ENCODE measurements at regions of chr1 and their contacts with region 1.

Region 1: GRCh38 chr1:9249534-9250410 is 15.2 kb downstream of the H6PD start:
- DNase-seq: peak; percentile 79
- ATAC-seq: peak; percentile 78
- H3K4me3 ChIP-seq: peak overlapping the region; percentile 46 to 74 (median 52); a peak in 5 of 6 replicates
- H3K27ac ChIP-seq: peak overlapping the region; percentile 86
- H3K4me1 ChIP-seq: peaks cover 62% of the 10 kb centered on the region
- H3K27me3 ChIP-seq: no peaks in the 10 kb centered on the region
- CTCF ChIP-seq: peak; percentile 98
- EP300 ChIP-seq: peak in 1 of 2 experiments; percentile 57; a peak in 2 of 4 replicates
- POLR2A ChIP-seq: peak; percentile 40 to 65; a peak in 3 of 4 replicates
- RAD21 ChIP-seq: peak; percentile 90

Region 2: GRCh38 chr1:9110669-9111356 is 139.0 kb before region 1 on chr1:
- CTCF ChIA-PET with region 1: interaction called, 3 read pairs
- POLR2A ChIA-PET with region 1: interaction called, 9 read pairs
- in situ Hi-C with region 1: loop called (anchors 5 kb)
- intact Hi-C with region 1: no loop called
- DNase-seq: peak; percentile 85
- ATAC-seq: peak; percentile 53
- H3K4me3 ChIP-seq: no peak overlapping the region; a peak in 1 of 6 replicates
- H3K27ac ChIP-seq: no peak overlapping the region
- H3K4me1 ChIP-seq: peaks cover 55% of the 10 kb centered on the region
- H3K27me3 ChIP-seq: no peaks in the 10 kb centered on the region
- CTCF ChIP-seq: peak; percentile 97
- EP300 ChIP-seq: no peak
- POLR2A ChIP-seq: no peak
- RAD21 ChIP-seq: peak; percentile 93

Region 3: GRCh38 chr1:9166289-9167235 is 83.2 kb before region 1 on chr1:
- CTCF ChIA-PET with region 1: interaction called, 3 read pairs
- POLR2A ChIA-PET with region 1: interaction called, 12 read pairs
- in situ Hi-C with region 1: no loop called
- intact Hi-C with region 1: no loop called
- DNase-seq: no peak
- ATAC-seq: no peak
- H3K4me3 ChIP-seq: no peak overlapping the region
- H3K27ac ChIP-seq: no peak overlapping the region
- H3K4me1 ChIP-seq: peaks cover 81% of the 10 kb centered on the region
- H3K27me3 ChIP-seq: no peaks in the 10 kb centered on the region
- CTCF ChIP-seq: no peak
- EP300 ChIP-seq: no peak
- POLR2A ChIP-seq: no peak
- RAD21 ChIP-seq: no peak

Region 4: DNA sequence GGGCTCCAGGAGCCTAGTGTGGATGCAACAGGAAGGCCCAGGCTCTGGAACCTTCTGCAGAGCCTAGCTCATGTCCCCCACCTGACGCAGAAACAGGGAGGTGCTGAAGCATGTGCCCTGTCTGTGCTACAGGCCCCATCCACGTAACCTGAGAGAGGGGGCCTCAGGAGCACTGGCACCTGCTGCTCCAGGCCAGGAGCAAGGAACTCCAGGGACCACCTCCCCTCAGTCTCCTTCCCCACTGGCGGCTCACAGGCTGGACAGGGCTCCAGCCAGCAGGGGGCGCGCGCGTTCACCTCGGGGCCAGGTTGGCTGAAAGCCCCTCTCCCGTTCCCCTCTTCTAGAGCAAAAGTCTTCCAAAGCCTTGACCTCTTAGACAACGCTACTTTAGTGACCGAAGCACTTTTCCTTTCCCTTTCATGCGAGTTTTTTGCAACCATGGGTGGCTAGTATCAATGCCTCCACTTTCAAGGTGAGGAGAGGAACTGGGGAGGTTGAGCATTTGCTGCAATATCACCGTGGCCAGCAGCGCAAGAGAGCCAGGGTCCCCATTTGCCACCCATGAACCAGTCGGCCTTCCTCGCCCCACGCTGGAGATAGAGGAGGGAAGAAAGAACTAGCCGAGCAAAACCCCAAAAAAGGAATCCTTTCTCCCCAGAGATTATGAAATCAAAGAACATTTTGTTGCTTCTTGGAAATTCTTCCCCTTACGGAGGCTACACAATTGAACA is 68.4 kb before region 1 on chr1:
- CTCF ChIA-PET with region 1: interaction called, 3 read pairs
- POLR2A ChIA-PET with region 1: interaction called, 22 read pairs
- in situ Hi-C with region 1: no loop called
- intact Hi-C with region 1: no loop called
- DNase-seq: peak; percentile 61
- ATAC-seq: peak; percentile 74
- H3K4me3 ChIP-seq: peak overlapping the region; percentile 88 to 94 (median 92)
- H3K27ac ChIP-seq: peak overlapping the region; percentile 92
- H3K4me1 ChIP-seq: peaks cover 71% of the 10 kb centered on the region
- H3K27me3 ChIP-seq: no peaks in the 10 kb centered on the region; a peak in 1 of 5 replicates
- CTCF ChIP-seq: peak; percentile 99
- EP300 ChIP-seq: no peak
- POLR2A ChIP-seq: peak in 1 of 2 experiments; percentile 37; a peak in 1 of 4 replicates
- RAD21 ChIP-seq: peak; percentile 77

Region 5: DNA sequence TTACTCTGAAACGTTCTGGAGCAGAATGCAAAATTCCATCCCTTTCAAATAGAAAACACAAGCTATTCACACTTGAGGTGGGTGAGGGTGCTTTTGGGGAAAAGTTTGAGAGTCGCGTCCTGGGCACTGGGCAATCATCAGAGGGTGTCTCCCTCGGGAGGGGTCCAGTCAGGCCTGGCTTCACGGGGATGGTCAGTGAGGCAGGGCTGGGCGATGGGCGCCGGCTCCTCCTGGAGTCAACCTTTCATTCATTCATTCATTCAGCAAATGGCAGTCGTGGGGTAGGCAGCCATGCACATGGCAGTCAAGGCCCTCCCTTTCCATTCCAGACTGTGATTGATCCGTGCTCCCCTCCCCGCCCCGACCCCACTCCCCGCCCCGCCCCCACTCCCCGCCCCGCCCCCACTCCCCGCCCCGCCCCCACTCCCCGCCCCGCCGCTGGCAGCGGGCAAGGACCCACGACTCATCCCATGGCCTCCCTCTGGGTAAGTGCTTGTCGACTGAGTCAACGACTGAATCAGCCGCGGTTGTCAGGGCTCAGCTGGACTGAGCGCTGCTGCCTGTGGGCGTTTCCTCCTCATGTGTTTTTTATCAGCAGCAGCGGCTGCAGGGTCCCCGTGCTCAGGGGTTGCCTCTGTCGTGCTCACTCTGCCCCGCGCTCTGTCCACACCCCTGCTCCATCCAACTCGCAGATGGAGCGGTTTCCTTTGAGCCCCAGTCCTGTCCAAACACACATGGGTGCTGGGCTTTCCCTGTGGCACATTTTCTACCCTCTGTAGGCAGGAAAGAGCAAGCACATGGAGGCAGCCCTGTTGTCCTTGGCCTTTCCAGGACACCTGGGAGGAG is 30.5 kb after region 1 on chr1:
- CTCF ChIA-PET with region 1: no interaction called
- POLR2A ChIA-PET with region 1: interaction called, 15 read pairs
- in situ Hi-C with region 1: no loop called
- intact Hi-C with region 1: no loop called
- DNase-seq: peak; percentile 35
- ATAC-seq: peak; percentile 58
- H3K4me3 ChIP-seq: peak overlapping the region; percentile 29 to 67 (median 53)
- H3K27ac ChIP-seq: peak overlapping the region; percentile 27
- H3K4me1 ChIP-seq: peaks cover 50% of the 10 kb centered on the region
- H3K27me3 ChIP-seq: no peaks in the 10 kb centered on the region
- CTCF ChIP-seq: no peak
- EP300 ChIP-seq: no peak
- POLR2A ChIP-seq: no peak
- RAD21 ChIP-seq: no peak

Region 6: GRCh38 chr1:9438431-9439073 is 188.8 kb after region 1 on chr1:
- CTCF ChIA-PET with region 1: no interaction called
- POLR2A ChIA-PET with region 1: interaction called, 23 read pairs
- in situ Hi-C with region 1: no loop called
- intact Hi-C with region 1: no loop called
- DNase-seq: peak; percentile 91
- ATAC-seq: peak; percentile 59
- H3K4me3 ChIP-seq: peak overlapping the region; percentile 29 to 64 (median 30)
- H3K27ac ChIP-seq: peak overlapping the region; percentile 88
- H3K4me1 ChIP-seq: peaks cover 100% of the 10 kb centered on the region
- H3K27me3 ChIP-seq: no peaks in the 10 kb centered on the region
- CTCF ChIP-seq: no peak
- EP300 ChIP-seq: peak; percentile 52 to 64; a peak in 2 of 4 replicates
- POLR2A ChIP-seq: peak; percentile 49 to 51; a peak in 2 of 4 replicates
- RAD21 ChIP-seq: no peak